ENCODE measurements at regions of chr5 and their contacts with region 1.

Region 1: DNA sequence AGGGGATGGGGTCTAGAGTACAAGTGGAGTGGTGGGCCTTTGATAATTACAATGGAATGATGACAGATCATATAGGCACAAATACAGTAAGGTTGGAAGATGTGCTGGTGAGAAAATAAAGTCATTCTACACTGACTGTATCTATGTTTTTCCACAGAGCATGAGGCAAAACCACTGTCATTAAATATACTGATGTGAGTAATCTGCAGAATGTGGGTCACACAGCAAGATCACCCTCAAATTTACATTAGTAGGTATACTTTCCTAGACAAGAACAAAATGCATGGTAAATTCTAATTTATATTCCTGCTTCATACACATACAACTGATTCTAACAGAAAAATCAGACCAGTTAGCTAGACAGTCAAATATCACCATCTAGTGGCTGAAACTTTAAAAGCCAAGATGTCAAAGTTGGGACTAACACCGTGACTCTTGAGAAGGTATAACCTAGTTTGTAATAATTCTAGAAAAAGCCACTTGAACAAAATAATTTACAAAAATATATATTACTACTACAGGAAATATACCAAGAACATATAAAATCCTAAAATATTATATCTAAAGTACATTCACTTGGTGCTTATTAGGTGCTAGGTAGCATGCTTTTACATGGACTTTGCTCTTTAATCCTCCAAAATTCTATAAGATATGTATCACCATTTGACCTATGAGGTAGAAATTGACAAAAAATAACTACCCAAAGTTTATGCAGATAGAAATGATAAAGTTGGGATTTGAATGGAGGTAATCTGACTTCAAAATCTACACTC is 19.5 kb downstream of the TTC33 start:
- DNase-seq: no peak
- H3K4me3 ChIP-seq: no peak overlapping the region
- H3K27ac ChIP-seq: no peak overlapping the region
- H3K4me1 ChIP-seq: no peaks in the 10 kb centered on the region
- H3K27me3 ChIP-seq: no peaks in the 10 kb centered on the region
- CTCF ChIP-seq: peak in 2 of 3 experiments; percentile 36 to 49; a peak in 2 of 4 replicates
- EP300 ChIP-seq: no peak
- POLR2A ChIP-seq: no peak
- RAD21 ChIP-seq: peak; percentile 73 to 75

Region 2: DNA sequence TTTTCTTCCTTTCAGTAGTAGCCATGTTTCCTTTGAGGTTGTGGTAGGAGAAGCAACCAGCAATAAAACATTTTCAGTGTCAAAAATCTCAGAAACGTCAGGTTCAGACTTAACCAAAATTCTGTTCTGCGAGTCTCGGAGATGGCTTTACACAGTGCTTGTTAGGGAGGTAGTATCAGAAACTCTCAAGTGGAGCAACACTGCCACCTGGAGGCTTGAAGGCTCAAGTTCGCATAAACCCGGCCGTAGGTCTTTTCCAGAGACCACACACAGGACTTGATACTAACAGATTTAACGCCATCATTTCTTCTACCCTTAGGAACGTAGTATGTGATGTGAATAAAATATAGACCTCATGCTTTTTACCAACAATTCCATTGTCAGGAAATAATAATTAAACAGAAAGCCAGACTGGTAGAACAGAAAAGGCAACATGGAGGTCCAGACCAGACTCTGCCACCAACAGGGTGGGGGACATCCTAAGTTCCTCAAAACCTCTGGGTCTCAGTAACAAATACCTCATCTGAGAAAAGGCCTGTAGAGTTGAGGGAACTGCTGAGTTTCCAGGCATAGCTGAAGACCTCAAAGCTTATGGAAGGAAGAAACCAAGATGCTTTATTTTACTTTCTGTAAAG is 48.0 kb before region 1 on chr5:
- CTCF ChIA-PET with region 1: interaction called, 15 read pairs
- POLR2A ChIA-PET with region 1: no interaction called
- DNase-seq: peak in 1 of 2 experiments; percentile 86
- H3K4me3 ChIP-seq: no peak overlapping the region
- H3K27ac ChIP-seq: no peak overlapping the region
- H3K4me1 ChIP-seq: no peaks in the 10 kb centered on the region
- H3K27me3 ChIP-seq: peaks cover 0 to 3% (median 0%) of the 10 kb centered on the region in 4 experiments; a peak in 1 of 7 replicates
- CTCF ChIP-seq: peak; percentile 48 to 90 (median 89)
- EP300 ChIP-seq: no peak
- POLR2A ChIP-seq: no peak
- RAD21 ChIP-seq: peak; percentile 97 to 99

Region 3: GRCh38 chr5:40799258-40799657 is 63.0 kb after region 1 on chr5:
- CTCF ChIA-PET with region 1: no interaction called
- POLR2A ChIA-PET with region 1: no interaction called
- DNase-seq: no peak
- H3K4me3 ChIP-seq: peak overlapping the region in 3 of 4 experiments; percentile 65 to 96 (median 93); a peak in 5 of 8 replicates
- H3K27ac ChIP-seq: no peak overlapping the region
- H3K4me1 ChIP-seq: peaks cover 0 to 5% (median 0%) of the 10 kb centered on the region in 4 experiments; a peak in 2 of 7 replicates
- H3K27me3 ChIP-seq: no peaks in the 10 kb centered on the region
- CTCF ChIP-seq: no peak
- EP300 ChIP-seq: no peak
- POLR2A ChIP-seq: no peak
- RAD21 ChIP-seq: no peak

Region 4: DNA sequence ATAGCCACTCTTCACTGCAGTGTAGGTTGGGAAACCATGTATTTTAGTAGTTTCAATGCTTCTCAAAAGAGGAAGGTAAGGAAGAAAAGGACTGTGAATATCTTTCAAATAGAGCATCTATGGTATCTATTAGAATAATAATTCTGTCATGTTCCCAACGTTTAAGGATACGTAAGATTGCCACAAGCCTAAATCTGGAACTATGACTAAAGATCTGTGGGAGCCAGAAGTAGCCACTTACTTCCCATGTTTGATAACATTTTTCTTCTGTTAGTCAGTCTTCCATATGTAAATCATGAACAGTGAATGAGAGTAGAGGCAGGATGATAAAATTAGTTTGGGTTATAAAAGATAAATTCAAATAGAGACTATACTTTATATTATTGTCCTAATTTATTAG is 351.2 kb after region 1 on chr5:
- CTCF ChIA-PET with region 1: no interaction called
- POLR2A ChIA-PET with region 1: no interaction called
- DNase-seq: no peak
- H3K4me3 ChIP-seq: no peak overlapping the region
- H3K27ac ChIP-seq: no peak overlapping the region
- H3K4me1 ChIP-seq: no peaks in the 10 kb centered on the region; a peak in 1 of 7 replicates
- H3K27me3 ChIP-seq: no peaks in the 10 kb centered on the region
- CTCF ChIP-seq: no peak
- EP300 ChIP-seq: no peak
- POLR2A ChIP-seq: no peak
- RAD21 ChIP-seq: no peak